Activated CD8-positive, alpha-beta T cell treated with anti-CD3 and anti-CD28 coated beads for 36 hours (primary cell): ENCODE measurements at regions of chr10 and their contacts with region 1.

Region 1: GRCh38 chr10:123043409-123043925 is 34.7 kb downstream of the ACADSB start:
- DNase-seq: peak; percentile 63
- ATAC-seq: peak; percentile 90
- H3K4me3 Mint-ChIP-seq: no peak overlapping the region
- H3K27ac Mint-ChIP-seq: no peak overlapping the region
- H3K4me1 Mint-ChIP-seq: peaks cover 8% of the 10 kb centered on the region
- H3K27me3 Mint-ChIP-seq: no peaks in the 10 kb centered on the region
- CTCF ChIP-seq: peak; percentile 75

Region 2: DNA sequence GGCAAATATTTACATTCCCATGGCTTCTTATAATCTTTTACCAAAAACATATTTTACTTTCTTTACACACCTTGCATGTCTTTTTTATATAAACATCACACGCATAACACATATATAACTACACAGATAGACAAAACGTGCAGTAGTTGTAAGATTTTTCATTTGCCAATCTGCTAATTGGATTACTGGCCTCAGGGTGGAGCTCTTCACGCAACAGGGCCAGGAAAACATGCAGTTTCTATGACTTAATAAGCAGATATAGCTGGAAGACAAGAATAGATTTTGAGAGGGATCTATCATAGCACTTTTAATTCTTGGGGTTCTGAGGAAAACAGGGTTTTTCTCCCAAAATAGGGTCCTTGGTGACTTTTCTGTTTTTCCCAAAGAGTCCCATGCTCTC is 21.9 kb before region 1 on chr10:
- CTCF ChIA-PET with region 1: interaction called, 12 read pairs
- POLR2A ChIA-PET with region 1: no interaction called
- intact Hi-C with region 1: no loop called
- DNase-seq: no peak
- ATAC-seq: no peak
- H3K4me3 Mint-ChIP-seq: no peak overlapping the region
- H3K27ac Mint-ChIP-seq: no peak overlapping the region
- H3K4me1 Mint-ChIP-seq: no peaks in the 10 kb centered on the region
- H3K27me3 Mint-ChIP-seq: no peaks in the 10 kb centered on the region
- CTCF ChIP-seq: no peak

Region 3: DNA sequence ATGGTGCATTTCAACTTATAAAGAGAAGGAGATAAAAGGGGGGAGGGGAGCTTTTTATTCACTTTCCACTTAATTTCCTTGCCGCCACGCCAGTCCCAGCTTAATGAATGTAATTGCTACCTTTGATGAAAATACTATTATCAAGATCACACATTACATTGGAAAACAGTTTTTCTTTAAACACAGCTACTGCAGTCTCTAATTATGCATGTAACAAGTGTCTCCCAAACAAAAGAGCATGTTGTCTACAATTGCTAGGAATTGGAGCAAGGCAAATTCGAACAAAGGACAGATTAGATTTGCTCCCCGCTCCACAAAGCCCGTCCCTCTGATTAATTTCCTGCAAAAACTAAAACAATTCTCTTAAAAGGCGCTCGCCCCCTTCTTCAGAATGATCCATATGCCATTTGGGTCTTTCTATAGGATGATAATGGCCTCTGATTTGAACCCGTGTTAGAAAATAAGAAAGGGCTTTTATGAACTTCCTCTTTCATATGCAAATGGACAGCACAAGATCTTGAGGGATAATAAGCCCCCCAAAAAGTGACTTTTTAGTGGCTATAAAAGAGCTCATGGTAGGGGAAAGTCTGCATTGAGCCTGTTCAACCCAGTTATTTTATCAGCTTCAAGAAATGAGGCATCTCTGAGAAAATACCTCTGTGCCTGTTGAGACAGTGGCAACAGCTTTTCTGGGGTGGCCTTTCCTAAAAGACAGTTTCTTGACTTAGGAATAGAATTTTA is 25.9 kb after region 1 on chr10:
- CTCF ChIA-PET with region 1: no interaction called
- POLR2A ChIA-PET with region 1: no interaction called
- intact Hi-C with region 1: no loop called
- DNase-seq: no peak
- ATAC-seq: no peak
- H3K4me3 Mint-ChIP-seq: no peak overlapping the region
- H3K27ac Mint-ChIP-seq: no peak overlapping the region
- H3K4me1 Mint-ChIP-seq: no peaks in the 10 kb centered on the region
- H3K27me3 Mint-ChIP-seq: peaks cover 27% of the 10 kb centered on the region
- CTCF ChIP-seq: no peak

Region 4: GRCh38 chr10:123287594-123288247 is 244.3 kb after region 1 on chr10:
- CTCF ChIA-PET with region 1: no interaction called
- POLR2A ChIA-PET with region 1: no interaction called
- intact Hi-C with region 1: no loop called
- DNase-seq: peak; percentile 73
- ATAC-seq: peak; percentile 99
- H3K4me3 Mint-ChIP-seq: no peak overlapping the region
- H3K27ac Mint-ChIP-seq: peak overlapping the region; percentile 83
- H3K4me1 Mint-ChIP-seq: peaks cover 18% of the 10 kb centered on the region
- H3K27me3 Mint-ChIP-seq: no peaks in the 10 kb centered on the region
- CTCF ChIP-seq: no peak

Region 5: GRCh38 chr10:123559066-123559822 is 515.8 kb after region 1 on chr10:
- CTCF ChIA-PET with region 1: interaction called, 8 read pairs
- POLR2A ChIA-PET with region 1: no interaction called
- intact Hi-C with region 1: loop called (anchors 5 kb)
- DNase-seq: peak; percentile 71
- ATAC-seq: peak; percentile 70
- H3K4me3 Mint-ChIP-seq: no peak overlapping the region
- H3K27ac Mint-ChIP-seq: no peak overlapping the region
- H3K4me1 Mint-ChIP-seq: no peaks in the 10 kb centered on the region
- H3K27me3 Mint-ChIP-seq: peaks cover 6% of the 10 kb centered on the region
- CTCF ChIP-seq: peak; percentile 94